Endothelial cell of umbilical vein (primary cell): ENCODE measurements at regions of chr16 and their contacts with region 1.

Region 1: DNA sequence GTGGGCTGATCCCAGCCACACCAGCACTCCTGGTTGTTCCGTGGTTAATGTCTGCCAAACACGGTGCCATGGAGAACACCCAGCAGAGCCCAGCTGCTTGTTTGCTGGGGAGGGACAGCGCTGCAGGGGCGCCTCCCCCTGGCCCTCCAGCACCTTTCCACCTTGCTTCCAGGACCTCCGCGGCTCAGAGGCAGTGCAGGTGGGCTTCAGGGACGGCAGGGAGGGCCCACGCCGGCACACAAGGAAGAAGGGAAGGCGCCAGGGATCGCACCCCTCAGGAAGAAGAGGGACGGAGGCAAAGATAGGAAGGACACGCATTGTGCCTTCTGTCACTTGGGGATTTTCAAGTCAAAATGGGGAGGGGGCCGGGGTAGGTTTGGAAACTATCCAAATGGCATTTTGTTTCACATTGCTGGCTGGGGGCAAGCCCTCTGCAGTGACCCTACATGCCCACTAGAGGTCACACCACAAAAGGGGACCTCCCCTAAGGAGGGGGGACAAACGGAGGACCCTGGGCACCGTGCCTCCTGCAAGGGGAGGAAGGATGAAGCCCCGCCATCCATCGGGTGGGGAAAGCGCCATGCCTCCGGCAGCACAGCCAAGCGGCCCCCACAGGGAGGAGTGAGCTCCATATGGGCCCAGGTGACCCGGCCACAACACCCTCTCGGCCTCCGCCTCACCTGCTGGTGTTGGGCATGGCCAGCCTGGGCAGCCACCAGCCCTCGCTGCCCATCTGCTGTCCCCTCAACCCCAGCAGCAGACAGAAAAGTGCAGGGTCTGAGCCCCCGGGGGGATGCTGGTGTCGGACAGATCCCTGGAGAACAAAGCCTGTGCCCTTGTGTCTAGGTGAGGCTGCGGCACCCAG is 7.5 kb upstream of the C16orf95 start:
- DNase-seq: peak; percentile 28
- H3K4me3 ChIP-seq: no peak overlapping the region
- H3K27ac ChIP-seq: no peak overlapping the region
- H3K4me1 ChIP-seq: no peaks in the 10 kb centered on the region
- H3K27me3 ChIP-seq: no peaks in the 10 kb centered on the region
- CTCF ChIP-seq: peak; percentile 63 to 87
- POLR2A ChIP-seq: no peak

Region 2: GRCh38 chr16:87305505-87306391 is 18.9 kb before region 1 on chr16:
- CTCF ChIA-PET with region 1: no interaction called
- POLR2A ChIA-PET with region 1: no interaction called
- dilution Hi-C with region 1: no loop called
- intact Hi-C with region 1: no loop called
- DNase-seq: no peak
- H3K4me3 ChIP-seq: no peak overlapping the region
- H3K27ac ChIP-seq: no peak overlapping the region
- H3K4me1 ChIP-seq: no peaks in the 10 kb centered on the region
- H3K27me3 ChIP-seq: no peaks in the 10 kb centered on the region
- CTCF ChIP-seq: peak in 1 of 2 donors; percentile 11
- POLR2A ChIP-seq: no peak

Region 3: DNA sequence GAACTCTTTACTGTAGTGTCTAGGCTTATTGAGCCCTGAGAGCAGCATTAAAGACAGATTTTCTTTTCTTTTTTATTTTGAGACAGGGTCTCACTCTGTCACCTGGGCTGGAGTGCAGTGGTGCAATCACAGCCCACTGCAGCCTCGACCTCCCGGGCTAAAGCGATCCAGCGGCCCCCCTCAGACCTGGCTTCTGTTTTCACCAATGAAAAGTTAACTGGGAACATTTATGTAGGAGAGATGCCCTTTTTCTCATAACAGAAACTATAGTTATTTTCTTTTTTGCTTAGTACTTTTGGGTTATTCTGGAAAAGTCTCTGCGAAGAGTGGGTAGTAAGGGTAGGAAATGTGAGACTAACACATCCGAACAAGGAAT is 69.0 kb after region 1 on chr16:
- CTCF ChIA-PET with region 1: interaction called, 8 read pairs
- POLR2A ChIA-PET with region 1: no interaction called
- dilution Hi-C with region 1: no loop called
- intact Hi-C with region 1: loop called (anchors 1 kb)
- DNase-seq: no peak
- H3K4me3 ChIP-seq: peak overlapping the region in 2 of 3 experiments; percentile 82 to 91
- H3K27ac ChIP-seq: no peak overlapping the region
- H3K4me1 ChIP-seq: peaks cover 26% of the 10 kb centered on the region
- H3K27me3 ChIP-seq: no peaks in the 10 kb centered on the region
- CTCF ChIP-seq: no peak
- POLR2A ChIP-seq: no peak